CD4-positive, alpha-beta memory T cell (primary cell): ENCODE measurements at regions of chr1 and their contacts with region 1.

Region 1: DNA sequence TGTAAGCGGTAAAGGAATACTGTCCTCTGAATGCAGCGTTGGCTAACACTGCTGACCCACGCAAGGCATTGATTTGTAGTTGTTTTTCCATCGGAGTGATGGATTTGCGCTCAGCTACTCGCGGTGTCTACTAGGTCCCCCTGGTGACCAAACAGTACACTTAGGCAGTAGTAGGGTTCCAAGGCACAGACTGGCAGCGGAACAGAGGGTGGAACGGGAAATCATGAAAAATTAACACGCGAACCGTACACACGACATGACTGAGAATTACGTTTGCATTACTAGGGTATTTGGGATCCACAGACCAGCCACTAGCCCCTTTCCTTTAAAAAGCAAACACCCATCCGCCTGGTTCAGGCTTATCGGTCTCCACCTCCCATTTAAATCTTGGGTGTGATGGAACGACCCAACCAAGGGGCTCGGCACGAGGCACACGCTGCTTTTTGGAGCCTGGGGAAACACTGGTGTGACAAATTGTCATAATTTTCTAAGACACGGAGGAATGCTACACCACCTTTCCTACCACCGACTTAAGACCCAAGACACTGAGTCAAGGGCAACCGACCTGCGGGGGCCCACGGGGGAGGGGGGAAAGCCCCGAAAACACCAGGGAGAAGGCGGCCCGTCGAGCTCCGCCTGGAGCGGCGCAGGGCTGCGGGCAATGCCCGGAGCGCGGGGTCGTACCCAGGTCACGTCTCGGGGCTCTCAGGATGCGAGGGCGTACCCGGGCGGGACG is 699 bp downstream of the DIPK1A start:
- DNase-seq: peak; percentile 75 to 88 (median 80)
- H3K4me3 ChIP-seq: peak overlapping the region; percentile 48 to 76
- H3K4me3 Mint-ChIP-seq: peak overlapping the region; percentile 89 to 98 (median 92)
- H3K27ac ChIP-seq: peak overlapping the region; percentile 98
- H3K27ac Mint-ChIP-seq: peak overlapping the region; percentile 97 to 99 (median 99)
- H3K4me1 ChIP-seq: peaks cover 76% of the 10 kb centered on the region
- H3K4me1 Mint-ChIP-seq: peaks cover 35 to 45% (median 40%) of the 10 kb centered on the region in 4 donors
- H3K27me3 ChIP-seq: no peaks in the 10 kb centered on the region
- H3K27me3 Mint-ChIP-seq: no peaks in the 10 kb centered on the region

Region 2: DNA sequence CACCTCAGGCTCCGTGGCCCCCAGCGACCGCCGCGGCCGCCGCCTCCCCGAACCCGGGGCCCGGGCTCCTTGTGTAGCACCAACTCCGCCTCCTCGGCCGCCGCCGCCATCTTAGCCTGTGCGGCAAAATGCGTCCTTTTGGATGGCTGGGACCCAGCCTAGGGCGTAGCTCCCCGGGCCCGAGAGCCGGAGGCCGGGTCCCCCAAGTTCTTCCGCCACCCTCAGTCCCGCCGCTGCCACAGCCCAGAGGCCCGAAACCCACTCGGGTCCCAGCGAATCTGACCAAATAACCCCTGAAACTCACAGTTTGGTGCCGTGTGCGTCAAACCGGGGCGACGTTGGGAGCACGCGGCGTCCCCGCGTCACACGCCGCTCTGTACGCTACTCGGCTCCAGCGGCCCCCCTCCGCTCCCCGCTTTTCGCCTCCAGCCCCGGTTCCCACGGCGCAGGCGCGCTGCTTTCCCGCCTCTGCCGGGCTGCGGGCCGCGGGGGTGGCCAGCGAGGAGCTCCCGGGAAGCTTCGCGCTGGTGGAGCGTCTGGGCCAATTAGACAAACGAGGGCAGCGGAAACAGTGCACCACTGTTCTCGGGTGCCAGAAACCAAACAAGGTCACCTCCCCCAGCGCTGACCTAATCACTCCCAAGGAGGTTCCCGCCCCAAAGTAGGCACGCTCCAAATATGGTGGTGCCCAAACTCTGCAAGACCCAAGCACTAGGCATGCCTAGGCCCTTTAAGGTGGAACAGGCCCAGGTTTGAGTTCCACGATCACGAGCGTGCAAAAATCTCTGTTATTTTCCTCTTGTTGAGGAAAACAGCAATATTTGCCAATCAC is 1938.7 kb before region 1 on chr1 and contains the start of gene ZNF644:
- CTCF ChIA-PET with region 1: no interaction called
- POLR2A ChIA-PET with region 1: no interaction called
- intact Hi-C with region 1: loop called (anchors 5 kb)
- DNase-seq: peak; percentile 92 to 98 (median 94)
- H3K4me3 ChIP-seq: peak within 1 kb of the TSS; percentile 57 to 88
- H3K4me3 Mint-ChIP-seq: peak within 1 kb of the TSS; percentile 88 to 96 (median 95)
- H3K27ac ChIP-seq: peak within 1 kb of the TSS; percentile 99
- H3K27ac Mint-ChIP-seq: peak within 1 kb of the TSS; percentile 84 to 99 (median 98)
- H3K4me1 ChIP-seq: peaks cover 56% of the 10 kb centered on the region
- H3K4me1 Mint-ChIP-seq: peaks cover 35 to 72% (median 54%) of the 10 kb centered on the region in 4 donors
- H3K27me3 ChIP-seq: no peaks in the 10 kb centered on the region
- H3K27me3 Mint-ChIP-seq: no peaks in the 10 kb centered on the region
- total RNA-seq, gene ZNF644: 72.7 to 76.3 TPM

Region 3: GRCh38 chr1:92583821-92584760 is 376.5 kb before region 1 on chr1:
- CTCF ChIA-PET with region 1: no interaction called
- POLR2A ChIA-PET with region 1: no interaction called
- intact Hi-C with region 1: loop called (anchors 10 kb)
- DNase-seq: peak; percentile 39 to 79 (median 67)
- H3K4me3 ChIP-seq: peak overlapping the region; percentile 13 to 29
- H3K4me3 Mint-ChIP-seq: peak overlapping the region; percentile 41 to 75 (median 66)
- H3K27ac ChIP-seq: no peak overlapping the region
- H3K27ac Mint-ChIP-seq: peak overlapping the region; percentile 44 to 84 (median 62)
- H3K4me1 ChIP-seq: peaks cover 44% of the 10 kb centered on the region
- H3K4me1 Mint-ChIP-seq: peaks cover 24 to 53% (median 40%) of the 10 kb centered on the region in 4 donors
- H3K27me3 ChIP-seq: no peaks in the 10 kb centered on the region
- H3K27me3 Mint-ChIP-seq: no peaks in the 10 kb centered on the region

Region 4: DNA sequence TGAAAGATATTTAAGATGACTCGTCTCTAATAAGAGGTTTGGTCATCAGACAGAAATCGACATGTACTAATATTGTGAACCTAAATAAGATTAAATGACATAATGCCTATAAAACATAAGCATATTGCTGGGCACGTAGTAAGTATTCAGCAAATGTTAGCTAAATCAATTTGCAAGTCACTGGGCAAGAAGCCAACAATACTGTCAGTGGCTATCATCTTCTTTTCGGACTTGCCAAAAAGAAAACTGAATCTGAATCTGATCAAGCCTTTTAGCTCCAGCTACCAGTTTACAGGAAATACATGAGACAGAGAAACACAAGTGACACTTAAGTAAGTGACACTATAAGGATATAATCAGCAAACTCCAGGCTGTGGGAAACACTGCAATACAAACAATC is 82.8 kb before region 1 on chr1:
- CTCF ChIA-PET with region 1: interaction called, 10 read pairs
- POLR2A ChIA-PET with region 1: interaction called, 47 read pairs
- intact Hi-C with region 1: no loop called
- DNase-seq: no peak
- H3K4me3 ChIP-seq: no peak overlapping the region
- H3K4me3 Mint-ChIP-seq: peak overlapping the region in 7 of 8 donors; percentile 3 to 83 (median 63)
- H3K27ac ChIP-seq: no peak overlapping the region
- H3K27ac Mint-ChIP-seq: peak overlapping the region; percentile 9 to 93 (median 52)
- H3K4me1 ChIP-seq: peaks cover 42% of the 10 kb centered on the region
- H3K4me1 Mint-ChIP-seq: peaks cover 22 to 32% (median 28%) of the 10 kb centered on the region in 4 donors
- H3K27me3 ChIP-seq: no peaks in the 10 kb centered on the region
- H3K27me3 Mint-ChIP-seq: no peaks in the 10 kb centered on the region

Region 5: DNA sequence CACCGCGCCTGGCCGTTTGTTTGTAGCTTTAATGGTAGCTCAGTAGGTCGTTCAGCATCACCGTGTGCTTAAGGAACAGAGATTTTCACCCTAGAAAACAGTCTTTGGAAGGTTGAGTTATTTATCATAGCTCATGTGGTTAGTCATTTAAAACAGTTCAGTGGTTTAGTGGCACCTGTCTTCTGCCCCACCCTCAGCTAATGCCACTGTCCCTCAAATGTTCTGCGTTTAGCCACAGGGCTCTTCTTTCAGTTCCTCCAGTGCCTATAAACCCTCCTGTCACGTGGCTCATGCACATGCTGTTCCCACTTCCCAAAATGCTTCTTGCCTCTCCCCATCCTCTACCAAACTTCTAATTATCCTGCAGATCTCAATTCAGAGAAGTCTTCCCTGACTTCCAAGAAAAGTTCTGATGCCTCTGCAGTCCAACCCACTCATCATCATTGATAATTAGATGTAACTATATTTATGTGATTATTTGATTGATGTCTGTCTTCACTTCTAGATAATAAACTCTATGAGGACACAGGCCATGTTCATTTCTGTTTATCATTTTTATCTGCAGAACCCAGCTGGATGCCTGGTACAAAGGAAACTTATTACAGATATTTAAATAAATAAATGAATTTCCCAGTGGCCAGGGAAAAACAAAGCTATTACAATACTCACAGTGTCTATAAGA is 15.1 kb after region 1 on chr1:
- CTCF ChIA-PET with region 1: interaction called, 63 read pairs
- POLR2A ChIA-PET with region 1: interaction called, 244 read pairs
- intact Hi-C with region 1: no loop called
- DNase-seq: no peak
- H3K4me3 ChIP-seq: no peak overlapping the region
- H3K4me3 Mint-ChIP-seq: peak overlapping the region in 7 of 8 donors; percentile 1 to 68 (median 56)
- H3K27ac ChIP-seq: no peak overlapping the region
- H3K27ac Mint-ChIP-seq: peak overlapping the region; percentile 10 to 93 (median 58)
- H3K4me1 ChIP-seq: peaks cover 80% of the 10 kb centered on the region
- H3K4me1 Mint-ChIP-seq: peaks cover 37 to 62% (median 48%) of the 10 kb centered on the region in 4 donors
- H3K27me3 ChIP-seq: no peaks in the 10 kb centered on the region
- H3K27me3 Mint-ChIP-seq: no peaks in the 10 kb centered on the region

Region 6: GRCh38 chr1:93042187-93043056 is 81.9 kb after region 1 on chr1:
- CTCF ChIA-PET with region 1: interaction called, 5 read pairs
- POLR2A ChIA-PET with region 1: interaction called, 15 read pairs
- intact Hi-C with region 1: loop called (anchors 1 kb)
- DNase-seq: peak; percentile 68 to 86 (median 80)
- H3K4me3 ChIP-seq: peak overlapping the region; percentile 3 to 49
- H3K4me3 Mint-ChIP-seq: peak overlapping the region; percentile 69 to 93 (median 87)
- H3K27ac ChIP-seq: peak overlapping the region; percentile 76
- H3K27ac Mint-ChIP-seq: peak overlapping the region; percentile 80 to 98 (median 97)
- H3K4me1 ChIP-seq: peaks cover 13% of the 10 kb centered on the region
- H3K4me1 Mint-ChIP-seq: peaks cover 4 to 18% (median 10%) of the 10 kb centered on the region in 4 donors
- H3K27me3 ChIP-seq: no peaks in the 10 kb centered on the region
- H3K27me3 Mint-ChIP-seq: no peaks in the 10 kb centered on the region

Region 7: GRCh38 chr1:93345633-93346420 is 385.3 kb after region 1 on chr1 and contains the start of gene DR1:
- CTCF ChIA-PET with region 1: no interaction called
- POLR2A ChIA-PET with region 1: interaction called, 14 read pairs
- intact Hi-C with region 1: loop called (anchors 5 kb)
- DNase-seq: peak; percentile 87 to 92 (median 89)
- H3K4me3 ChIP-seq: peak within 1 kb of the TSS; percentile 80 to 100
- H3K4me3 Mint-ChIP-seq: peak within 1 kb of the TSS; percentile 96 to 99 (median 98)
- H3K27ac ChIP-seq: peak within 1 kb of the TSS; percentile 91
- H3K27ac Mint-ChIP-seq: peak within 1 kb of the TSS; percentile 95 to 99 (median 98)
- H3K4me1 ChIP-seq: peaks cover 46% of the 10 kb centered on the region
- H3K4me1 Mint-ChIP-seq: peaks cover 23 to 59% (median 30%) of the 10 kb centered on the region in 4 donors
- H3K27me3 ChIP-seq: no peaks in the 10 kb centered on the region
- H3K27me3 Mint-ChIP-seq: no peaks in the 10 kb centered on the region
- total RNA-seq, gene DR1: 71.8 to 71.9 TPM

Region 8: DNA sequence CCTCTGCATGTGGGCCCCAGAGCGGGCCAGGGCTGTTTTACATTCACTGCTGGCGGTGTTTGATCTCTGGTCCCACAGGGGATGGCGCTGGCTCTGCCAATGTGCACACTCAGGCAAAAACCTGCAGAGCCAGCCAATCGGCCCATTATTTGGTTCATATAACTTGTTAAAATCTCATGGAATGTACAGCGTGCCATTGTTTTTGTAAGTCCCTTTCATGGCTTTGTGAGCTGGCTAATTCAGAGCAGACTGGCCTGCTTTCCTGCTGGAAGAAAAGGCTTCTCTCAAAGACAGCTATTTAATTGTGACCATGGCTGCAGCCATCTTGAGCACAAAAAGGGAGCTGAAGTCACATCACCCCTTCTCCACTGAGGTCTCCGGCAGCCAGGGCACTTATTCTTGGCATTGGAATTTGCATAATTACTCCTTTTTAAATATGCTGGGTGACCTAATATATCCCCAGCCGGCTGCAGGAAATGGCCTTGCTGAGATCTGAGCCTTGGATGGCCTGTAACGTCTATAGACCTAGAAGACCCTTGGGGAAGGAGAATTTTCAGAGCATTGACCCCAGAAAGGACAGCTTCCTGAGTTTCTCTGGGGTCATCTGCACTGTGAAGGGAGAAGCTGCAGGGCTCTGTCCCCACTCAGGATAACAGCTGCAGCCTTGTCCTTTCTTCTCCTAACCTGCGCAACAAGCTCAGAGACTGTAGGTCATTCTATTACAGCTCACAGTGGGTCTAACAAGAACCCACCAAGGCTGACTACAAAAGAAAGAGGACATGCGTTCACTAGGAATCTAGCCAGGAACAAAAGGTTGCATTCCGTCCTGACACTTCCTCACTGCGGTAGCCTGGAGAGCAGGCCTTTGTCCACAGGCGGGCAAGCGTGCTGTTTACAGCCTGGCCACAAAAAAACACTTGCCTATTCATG is 675.3 kb after region 1 on chr1:
- CTCF ChIA-PET with region 1: no interaction called
- POLR2A ChIA-PET with region 1: no interaction called
- intact Hi-C with region 1: no loop called
- DNase-seq: no peak
- H3K4me3 ChIP-seq: no peak overlapping the region
- H3K4me3 Mint-ChIP-seq: no peak overlapping the region
- H3K27ac ChIP-seq: no peak overlapping the region
- H3K27ac Mint-ChIP-seq: no peak overlapping the region
- H3K4me1 ChIP-seq: no peaks in the 10 kb centered on the region
- H3K4me1 Mint-ChIP-seq: no peaks in the 10 kb centered on the region
- H3K27me3 ChIP-seq: no peaks in the 10 kb centered on the region
- H3K27me3 Mint-ChIP-seq: no peaks in the 10 kb centered on the region